AG04450 (cell line): ENCODE measurements at regions of chr1 and their contacts with region 1.

Region 1: DNA sequence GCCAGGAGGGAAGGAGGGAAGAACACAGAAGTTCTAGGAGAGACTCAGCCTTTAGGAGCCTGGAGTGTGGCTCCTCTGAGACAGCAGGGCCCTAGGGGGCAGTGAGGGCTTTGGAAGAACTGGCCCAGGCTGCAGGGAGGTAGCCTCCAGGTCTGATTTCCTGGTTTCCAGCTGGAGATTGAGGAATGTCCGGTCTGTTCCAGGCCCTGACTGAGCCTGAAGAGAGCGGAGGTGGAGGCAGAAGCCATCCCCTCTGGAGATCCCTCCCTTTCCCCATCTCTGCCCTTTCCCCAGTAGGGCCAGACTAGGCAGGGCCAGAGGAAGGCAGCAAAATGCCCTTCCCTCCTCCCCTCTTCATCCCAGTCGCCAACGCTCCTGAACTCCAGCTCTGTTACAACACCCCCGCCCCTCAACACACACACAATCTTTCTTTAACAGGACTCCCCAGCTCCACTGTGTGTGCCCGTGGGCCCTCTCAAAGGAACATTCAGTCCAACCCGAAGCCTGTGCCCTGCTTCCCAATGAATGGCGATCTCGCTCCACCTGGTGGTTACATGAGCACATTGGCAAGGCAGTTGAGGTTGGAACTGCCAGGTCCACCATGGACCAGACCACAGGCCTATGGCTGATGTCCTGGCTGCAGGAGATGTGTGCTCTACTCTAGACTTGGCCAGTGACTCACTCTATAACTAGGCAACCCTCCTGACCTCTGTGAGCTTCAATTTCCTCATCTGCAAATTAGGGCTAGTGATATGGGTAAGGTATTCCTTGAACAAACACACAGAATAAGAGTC is 32.0 kb downstream of the MAP7D1 start:
- DNase-seq: peak; percentile 80
- H3K4me3 ChIP-seq: 0 out of 2 replicates have a peak overlapping the region, but pooled peaks have one; percentile 10
- H3K27ac ChIP-seq: peak overlapping the region; percentile 87
- H3K27me3 ChIP-seq: no peaks in the 10 kb centered on the region
- CTCF ChIP-seq: peak; percentile 91

Region 2: DNA sequence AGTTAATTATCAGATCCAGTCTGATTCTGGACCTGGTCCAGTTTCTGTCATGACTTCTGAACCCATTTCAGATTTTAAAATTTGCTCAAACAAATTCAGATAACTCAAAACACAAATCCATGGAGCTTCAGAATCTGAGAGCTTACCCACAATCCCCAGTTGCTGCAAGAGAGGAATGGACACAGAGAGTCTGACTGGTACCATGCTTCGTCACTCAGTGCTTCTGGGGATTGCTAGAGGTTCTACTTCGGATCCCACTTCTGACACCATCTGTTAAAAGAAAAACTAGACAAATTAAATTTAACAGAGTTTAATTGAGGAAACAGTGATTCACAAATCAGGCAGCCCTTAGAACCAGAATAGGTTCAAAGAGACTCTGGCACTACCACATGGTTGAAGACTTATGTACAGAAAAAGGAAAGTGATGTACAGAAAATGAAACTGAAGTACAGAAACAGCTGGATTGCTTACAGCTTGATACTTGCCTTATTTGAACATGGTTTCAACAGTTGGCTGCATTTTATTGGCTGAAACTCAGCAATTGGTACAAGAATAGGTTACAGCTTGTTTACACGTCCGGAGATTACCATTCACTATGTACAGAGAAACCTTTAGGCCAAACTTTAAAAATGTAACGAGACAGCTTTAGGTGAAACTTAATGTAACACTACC is 164.8 kb before region 1 on chr1:
- CTCF ChIA-PET with region 1: no interaction called
- POLR2A ChIA-PET with region 1: no interaction called
- DNase-seq: no peak
- H3K4me3 ChIP-seq: no peak overlapping the region
- H3K27ac ChIP-seq: no peak overlapping the region
- H3K27me3 ChIP-seq: no peaks in the 10 kb centered on the region
- CTCF ChIP-seq: no peak

Region 3: GRCh38 chr1:36099681-36100341 is 88.2 kb before region 1 on chr1:
- CTCF ChIA-PET with region 1: interaction called, 21 read pairs
- POLR2A ChIA-PET with region 1: no interaction called
- DNase-seq: peak; percentile 45
- H3K4me3 ChIP-seq: no peak overlapping the region
- H3K27ac ChIP-seq: no peak overlapping the region
- H3K27me3 ChIP-seq: no peaks in the 10 kb centered on the region
- CTCF ChIP-seq: peak; percentile 86

Region 4: GRCh38 chr1:36149237-36149972 is 38.6 kb before region 1 on chr1 and contains the start of gene TRAPPC3:
- CTCF ChIA-PET with region 1: interaction called, 75 read pairs
- POLR2A ChIA-PET with region 1: interaction called, 32 read pairs
- DNase-seq: peak; percentile 99
- H3K4me3 ChIP-seq: peak within 1 kb of the TSS; percentile 75
- H3K27ac ChIP-seq: peak within 1 kb of the TSS; percentile 99
- H3K27me3 ChIP-seq: no peaks in the 10 kb centered on the region
- CTCF ChIP-seq: peak; percentile 94
- polyA plus RNA-seq, gene TRAPPC3: 88.5 and 92.3 TPM in 2 replicates

Region 5: DNA sequence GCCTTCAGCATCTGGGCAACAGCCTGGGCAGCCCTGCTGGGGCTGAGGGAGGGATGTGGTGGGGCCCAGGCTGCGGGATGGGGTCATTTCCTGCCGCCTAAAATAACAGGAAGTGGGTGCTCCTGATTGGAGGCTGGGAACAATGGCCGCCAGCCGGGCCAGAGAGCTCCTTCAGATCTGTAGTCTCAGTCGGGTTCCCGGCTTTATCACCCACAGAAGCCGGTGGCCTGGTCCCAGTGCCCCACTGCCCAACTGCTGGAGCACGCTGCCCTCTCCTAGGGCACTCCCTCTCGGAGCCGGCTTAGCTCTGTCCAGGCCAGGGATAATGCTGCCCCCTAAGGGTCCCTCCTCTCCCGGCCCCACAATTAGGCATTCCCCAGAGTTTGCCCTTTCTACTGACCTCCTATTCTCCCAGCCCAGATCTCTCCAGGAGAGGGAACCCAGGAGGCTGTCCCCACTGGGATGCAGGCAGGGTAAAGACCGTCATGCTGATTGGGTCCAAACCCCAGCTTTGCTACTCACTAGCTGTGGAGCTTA is 27.0 kb before region 1 on chr1:
- CTCF ChIA-PET with region 1: interaction called, 16 read pairs
- POLR2A ChIA-PET with region 1: interaction called, 9 read pairs
- DNase-seq: no peak
- H3K4me3 ChIP-seq: peak overlapping the region; percentile 66
- H3K27ac ChIP-seq: peak overlapping the region; percentile 78
- H3K27me3 ChIP-seq: no peaks in the 10 kb centered on the region
- CTCF ChIP-seq: peak; percentile 56

Region 6: DNA sequence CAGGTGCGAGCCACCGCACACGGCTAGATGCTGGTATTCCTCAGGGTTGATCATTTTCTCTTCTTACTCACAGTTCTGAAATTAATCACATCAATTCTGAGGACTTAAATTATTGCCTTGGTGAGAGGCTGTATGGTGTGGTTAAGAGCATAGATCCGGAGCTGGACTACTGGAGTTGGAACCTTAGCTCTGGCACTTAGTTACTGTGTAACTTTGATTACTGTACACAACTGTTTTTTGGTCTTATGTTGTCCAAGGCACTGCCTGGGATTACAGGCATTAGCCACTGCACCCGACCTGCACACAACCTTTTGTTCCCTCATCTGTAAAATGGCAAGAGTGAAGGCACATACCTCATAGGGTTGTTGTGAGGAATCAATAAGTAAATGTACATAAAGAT is 10.6 kb after region 1 on chr1:
- CTCF ChIA-PET with region 1: interaction called, 9 read pairs
- POLR2A ChIA-PET with region 1: interaction called, 11 read pairs
- DNase-seq: no peak
- H3K4me3 ChIP-seq: no peak overlapping the region
- H3K27ac ChIP-seq: no peak overlapping the region
- H3K27me3 ChIP-seq: no peaks in the 10 kb centered on the region
- CTCF ChIP-seq: no peak

Region 7: DNA sequence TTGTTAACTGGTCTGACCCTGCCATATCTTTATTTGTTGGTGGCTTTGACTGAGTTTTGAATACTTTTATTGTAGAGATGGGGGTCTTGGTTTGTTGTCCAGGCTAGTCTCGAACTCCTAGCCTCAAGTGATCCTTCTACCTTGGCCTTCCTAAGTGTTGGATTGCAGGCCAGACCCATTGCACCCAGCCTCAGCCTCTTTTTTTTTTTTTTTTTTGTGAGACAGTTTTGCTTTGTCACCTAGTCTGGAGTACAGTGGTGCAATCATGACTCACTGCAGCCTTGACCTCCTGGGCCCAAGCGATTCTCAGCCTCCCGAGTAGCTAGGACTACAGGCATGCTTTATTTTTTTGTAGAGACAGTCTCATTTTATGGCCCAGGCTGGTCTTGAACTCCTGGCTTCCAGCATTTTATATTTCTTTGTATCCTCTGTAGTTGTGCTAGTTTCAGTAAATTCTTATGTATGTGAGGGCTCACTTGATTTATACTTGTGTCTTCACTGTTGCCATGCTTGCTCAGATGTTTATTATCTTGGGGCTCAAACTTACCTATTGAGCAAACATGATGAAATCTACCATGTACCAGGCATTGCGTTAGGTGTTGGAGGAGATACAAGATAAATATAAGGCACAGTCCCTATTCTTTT is 60.4 kb after region 1 on chr1:
- CTCF ChIA-PET with region 1: interaction called, 10 read pairs
- POLR2A ChIA-PET with region 1: no interaction called
- DNase-seq: peak; percentile 50
- H3K4me3 ChIP-seq: no peak overlapping the region
- H3K27ac ChIP-seq: peak overlapping the region; percentile 78
- H3K27me3 ChIP-seq: no peaks in the 10 kb centered on the region
- CTCF ChIP-seq: no peak

Region 8: GRCh38 chr1:36285448-36286101 is 97.6 kb after region 1 on chr1:
- CTCF ChIA-PET with region 1: interaction called, 39 read pairs
- POLR2A ChIA-PET with region 1: no interaction called
- DNase-seq: peak; percentile 81
- H3K4me3 ChIP-seq: no peak overlapping the region
- H3K27ac ChIP-seq: no peak overlapping the region
- H3K27me3 ChIP-seq: no peaks in the 10 kb centered on the region
- CTCF ChIP-seq: peak; percentile 74